ENCODE measurements at regions of chr20 and their contacts with region 1.

Region 1: DNA sequence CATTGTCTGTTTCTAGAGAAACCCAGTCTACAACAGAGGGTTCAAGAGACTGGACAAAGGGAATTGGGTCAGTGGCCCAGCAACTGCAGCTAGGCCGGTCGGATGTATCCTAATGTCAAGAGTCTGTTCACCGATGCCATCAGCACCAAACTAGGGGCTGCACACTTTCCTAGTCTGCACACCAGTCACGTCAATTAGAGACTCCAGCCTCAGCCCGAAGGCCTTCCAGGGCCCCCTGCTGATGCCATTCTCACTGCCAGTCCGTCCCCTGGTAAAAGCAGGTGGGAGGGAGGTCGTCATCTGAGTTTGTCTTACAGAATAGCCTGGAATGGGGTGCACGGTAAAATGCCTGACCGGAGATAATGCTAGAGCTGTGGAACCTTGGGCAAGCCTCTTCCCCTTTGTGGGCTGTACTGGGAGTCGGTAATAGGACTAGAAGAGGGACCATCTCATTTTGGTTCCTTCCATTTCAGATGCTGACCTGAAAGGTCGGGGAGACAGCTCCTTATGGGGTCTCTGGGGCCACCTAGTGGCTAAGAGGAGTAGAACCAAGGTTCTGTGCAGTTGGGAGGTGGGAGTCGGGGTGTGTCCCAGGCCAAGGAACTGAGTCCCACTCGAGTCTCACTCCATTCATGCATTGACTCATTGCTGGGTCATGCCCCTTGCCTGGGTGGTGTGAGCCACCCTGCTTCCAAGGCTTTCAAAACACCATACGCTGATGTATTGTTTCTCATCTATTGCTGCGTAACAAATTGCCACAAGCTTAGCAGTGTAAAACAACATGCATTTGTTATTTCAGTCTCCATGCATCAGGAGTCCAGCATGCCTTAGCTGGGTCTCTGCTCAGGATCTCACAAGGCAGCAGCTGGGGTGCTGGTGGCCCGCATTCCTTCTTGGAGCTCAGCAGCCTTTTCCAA is 5.1 kb downstream of the SOX12 start:
- DNase-seq: peak; percentile 73
- H3K4me3 Mint-ChIP-seq: no peak overlapping the region
- H3K27ac Mint-ChIP-seq: no peak overlapping the region
- H3K4me1 Mint-ChIP-seq: peaks cover 7% of the 10 kb centered on the region
- H3K27me3 Mint-ChIP-seq: no peaks in the 10 kb centered on the region

Region 2: GRCh38 chr20:208942-209566 is 121.4 kb before region 1 on chr20:
- CTCF ChIA-PET with region 1: interaction called, 15 read pairs
- POLR2A ChIA-PET with region 1: no interaction called
- intact Hi-C with region 1: loop called (anchors 1 kb)
- DNase-seq: peak; percentile 11
- H3K4me3 Mint-ChIP-seq: no peak overlapping the region
- H3K27ac Mint-ChIP-seq: no peak overlapping the region
- H3K4me1 Mint-ChIP-seq: no peaks in the 10 kb centered on the region
- H3K27me3 Mint-ChIP-seq: no peaks in the 10 kb centered on the region

Region 3: DNA sequence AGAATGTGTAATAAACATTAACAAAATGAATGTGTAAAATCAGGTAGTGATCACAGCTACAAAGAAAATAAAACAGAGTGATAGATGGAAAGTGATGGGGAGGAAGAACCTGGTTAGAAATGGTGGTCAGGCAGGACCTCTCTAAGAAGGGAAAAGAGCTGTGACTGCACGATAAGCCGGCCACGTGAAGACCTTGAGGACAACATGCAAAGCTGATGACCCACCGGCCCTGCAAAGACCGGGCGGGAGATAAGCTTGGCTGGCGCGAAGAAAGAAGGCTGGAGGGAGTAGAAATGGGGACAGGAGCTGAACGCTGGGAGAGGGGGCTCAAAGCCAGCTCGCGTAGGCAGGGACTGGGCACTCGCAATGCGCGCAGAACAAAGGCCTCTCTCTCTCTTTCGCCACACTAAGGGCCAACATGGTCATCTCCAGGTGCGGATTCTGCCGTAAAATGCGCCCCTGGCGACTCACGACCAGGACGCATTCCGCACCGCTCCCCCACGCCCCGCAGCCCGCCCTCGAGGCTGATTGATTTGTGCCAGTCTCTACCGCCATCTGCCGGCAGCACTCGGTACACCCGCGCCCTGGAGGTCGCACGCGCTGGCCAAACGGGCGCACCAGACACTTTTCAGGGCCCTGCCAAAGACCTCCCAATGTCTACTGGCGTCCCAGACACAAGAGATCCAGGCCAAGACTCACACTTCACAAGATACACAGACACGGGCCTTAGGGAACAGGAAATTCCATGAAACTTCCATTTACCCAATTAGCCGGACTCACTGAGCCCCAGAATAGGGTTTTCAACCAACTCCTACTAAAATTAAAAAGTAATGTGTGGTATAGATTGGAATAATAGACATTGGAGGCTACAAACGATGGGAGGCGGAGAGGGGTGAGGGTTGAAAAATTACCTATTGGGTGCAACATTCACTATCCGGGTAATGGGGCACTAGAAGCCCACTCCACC is 63.6 kb before region 1 on chr20:
- CTCF ChIA-PET with region 1: interaction called, 25 read pairs
- POLR2A ChIA-PET with region 1: no interaction called
- intact Hi-C with region 1: loop called (anchors 2 kb)
- DNase-seq: peak; percentile 93
- H3K4me3 Mint-ChIP-seq: peak overlapping the region; percentile 78
- H3K27ac Mint-ChIP-seq: peak overlapping the region; percentile 25
- H3K4me1 Mint-ChIP-seq: peaks cover 10% of the 10 kb centered on the region
- H3K27me3 Mint-ChIP-seq: peaks cover 6% of the 10 kb centered on the region

Region 4: DNA sequence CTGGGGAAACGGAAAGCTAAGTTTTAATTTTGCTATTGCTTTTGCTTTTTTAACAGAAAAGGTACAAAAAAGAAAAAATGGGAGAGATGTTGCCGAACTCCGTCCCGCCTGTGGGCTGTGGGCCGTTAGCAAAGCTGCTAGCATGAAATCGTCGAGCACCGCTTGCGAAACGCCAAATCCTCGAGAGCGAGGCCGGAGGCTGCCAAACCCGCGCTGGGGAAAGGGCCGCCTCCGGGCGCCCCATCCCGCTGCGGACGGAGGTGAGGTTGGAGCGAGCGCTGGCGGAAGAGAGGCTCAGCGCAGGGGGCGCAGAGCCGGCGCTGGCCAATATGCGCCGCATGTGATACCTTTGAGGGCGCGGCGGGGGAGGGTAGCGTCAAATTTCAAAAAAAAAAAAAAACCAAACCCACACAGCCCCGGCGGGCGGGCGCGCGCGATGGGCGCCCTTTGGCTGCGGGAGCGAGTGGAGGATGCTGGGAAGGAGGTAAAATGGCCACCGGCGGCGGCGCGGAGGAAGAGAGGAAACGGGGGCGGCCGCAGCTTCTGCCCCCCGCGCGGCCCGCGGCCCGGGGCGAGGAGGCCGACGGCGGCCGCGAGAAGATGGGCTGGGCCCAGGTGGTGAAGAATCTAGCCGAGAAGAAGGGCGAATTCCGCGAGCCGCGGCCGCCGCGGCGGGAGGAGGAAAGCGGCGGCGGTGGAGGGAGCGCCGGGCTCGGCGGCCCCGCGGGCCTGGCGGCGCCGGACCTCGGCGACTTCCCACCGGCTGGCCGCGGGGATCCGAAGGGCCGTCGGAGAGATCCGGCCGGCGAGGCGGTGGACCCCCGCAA is 33.2 kb before region 1 on chr20 and contains the start of gene ZCCHC3:
- CTCF ChIA-PET with region 1: interaction called, 25 read pairs
- POLR2A ChIA-PET with region 1: interaction called, 17 read pairs
- intact Hi-C with region 1: no loop called
- DNase-seq: peak; percentile 89
- H3K4me3 Mint-ChIP-seq: peak within 1 kb of the TSS; percentile 88
- H3K27ac Mint-ChIP-seq: peak within 1 kb of the TSS; percentile 96
- H3K4me1 Mint-ChIP-seq: peaks cover 42% of the 10 kb centered on the region
- H3K27me3 Mint-ChIP-seq: no peaks in the 10 kb centered on the region
- total RNA-seq, gene ZCCHC3: 15.2 to 15.9 TPM

Region 5: GRCh38 chr20:347640-348484 is 17.4 kb after region 1 on chr20:
- CTCF ChIA-PET with region 1: interaction called, 37 read pairs
- POLR2A ChIA-PET with region 1: no interaction called
- intact Hi-C with region 1: no loop called
- DNase-seq: peak; percentile 76
- H3K4me3 Mint-ChIP-seq: peak overlapping the region; percentile 87
- H3K27ac Mint-ChIP-seq: peak overlapping the region; percentile 14
- H3K4me1 Mint-ChIP-seq: peaks cover 12% of the 10 kb centered on the region
- H3K27me3 Mint-ChIP-seq: no peaks in the 10 kb centered on the region

Region 6: DNA sequence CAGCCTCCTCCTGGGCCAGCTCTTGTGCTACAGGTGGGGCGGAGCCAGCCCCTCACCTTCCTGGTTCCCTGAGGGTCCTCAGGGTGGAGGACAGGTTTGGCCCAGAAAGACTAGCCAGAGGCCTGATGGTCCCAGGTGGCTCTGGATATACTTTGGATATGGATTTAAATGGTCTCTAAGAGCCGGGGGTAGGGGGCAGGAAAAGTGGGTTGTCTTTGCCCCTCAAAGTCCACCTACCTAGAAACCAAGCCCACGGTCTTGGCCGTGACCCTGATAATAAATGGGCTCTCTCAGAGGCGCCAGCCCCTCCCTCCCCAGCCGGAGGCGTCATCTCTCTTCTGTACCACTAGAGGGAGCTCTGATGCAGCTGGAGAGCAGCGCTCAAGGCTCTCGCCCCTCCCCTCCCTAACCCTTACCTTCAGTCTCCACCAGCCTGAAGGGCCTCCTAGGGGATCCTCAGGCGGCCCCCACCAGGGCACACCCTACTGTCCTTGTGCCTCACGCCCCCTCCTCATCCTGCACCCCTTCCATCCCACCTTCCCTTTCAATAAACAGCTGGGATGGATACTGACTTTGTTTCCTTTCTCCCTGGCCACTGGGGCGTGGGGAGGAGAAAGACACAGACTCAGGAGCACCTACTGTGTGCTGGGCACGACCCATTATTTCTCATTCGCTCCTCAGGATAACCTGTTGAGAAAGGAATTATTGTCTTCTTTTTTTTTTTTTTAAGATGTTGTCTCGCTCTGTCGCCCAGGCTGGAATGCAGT is 24.0 kb after region 1 on chr20:
- CTCF ChIA-PET with region 1: interaction called, 19 read pairs
- POLR2A ChIA-PET with region 1: no interaction called
- intact Hi-C with region 1: no loop called
- DNase-seq: peak; percentile 87
- H3K4me3 Mint-ChIP-seq: no peak overlapping the region
- H3K27ac Mint-ChIP-seq: no peak overlapping the region
- H3K4me1 Mint-ChIP-seq: no peaks in the 10 kb centered on the region
- H3K27me3 Mint-ChIP-seq: no peaks in the 10 kb centered on the region

Region 7: GRCh38 chr20:438571-439469 is 108.3 kb after region 1 on chr20:
- CTCF ChIA-PET with region 1: no interaction called
- POLR2A ChIA-PET with region 1: no interaction called
- intact Hi-C with region 1: no loop called
- DNase-seq: peak; percentile 76
- H3K4me3 Mint-ChIP-seq: peak overlapping the region; percentile 55
- H3K27ac Mint-ChIP-seq: peak overlapping the region; percentile 88
- H3K4me1 Mint-ChIP-seq: peaks cover 53% of the 10 kb centered on the region
- H3K27me3 Mint-ChIP-seq: no peaks in the 10 kb centered on the region

Measured in activated CD4-positive, alpha-beta memory T cell treated with anti-CD3 and anti-CD28 coated beads for 36 hours (primary cell).